ENCODE measurements at regions of chr21 and their contacts with region 1.

Region 1: GRCh38 chr21:45534663-45535331 is 7.4 kb downstream of the SLC19A1 start:
- DNase-seq: peak; percentile 42
- H3K4me3 ChIP-seq: no peak overlapping the region
- H3K27ac ChIP-seq: peak overlapping the region; percentile 15
- H3K4me1 ChIP-seq: peaks cover 24% of the 10 kb centered on the region
- H3K27me3 ChIP-seq: no peaks in the 10 kb centered on the region
- CTCF ChIP-seq: no peak
- POLR2A ChIP-seq: no peak

Region 2: DNA sequence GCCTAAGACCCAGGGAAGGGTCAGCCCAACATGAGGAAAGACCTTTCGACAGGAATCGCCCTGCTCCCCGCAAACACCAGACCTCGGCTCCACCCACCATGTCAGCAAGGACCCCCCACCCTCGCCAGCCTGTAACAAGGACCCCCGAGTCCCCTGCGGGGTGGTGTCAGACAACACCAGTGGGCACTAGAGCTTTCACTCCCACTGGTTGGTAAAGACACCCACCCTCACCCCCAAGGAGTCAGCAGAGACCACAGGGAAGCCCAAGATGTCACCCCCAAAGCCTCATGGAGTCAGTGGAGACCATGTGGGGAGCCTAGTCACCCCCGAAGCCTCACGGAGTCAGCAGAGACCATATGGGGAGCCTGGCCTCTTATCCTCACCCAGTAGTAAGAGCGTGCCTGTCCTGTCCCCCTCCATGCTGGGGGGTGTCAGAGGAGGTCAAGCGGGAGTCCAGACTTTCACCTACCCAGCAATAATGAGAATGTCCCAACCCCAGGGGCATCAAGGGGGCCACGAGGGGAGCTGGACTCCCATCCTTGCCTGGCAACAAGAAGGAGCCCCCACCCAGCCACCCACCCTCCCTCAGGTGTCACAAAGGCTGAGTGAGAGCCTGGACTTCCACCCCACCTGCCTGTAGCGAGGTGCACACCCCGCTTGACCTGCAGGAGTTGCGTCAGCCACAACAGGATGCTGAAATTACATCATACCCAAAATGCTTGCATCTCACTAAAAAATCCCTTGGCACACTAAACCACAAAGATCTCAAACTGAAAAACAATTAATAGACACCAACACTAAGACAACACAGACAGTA is 17.3 kb before region 1 on chr21:
- CTCF ChIA-PET with region 1: no interaction called
- POLR2A ChIA-PET with region 1: no interaction called
- dilution Hi-C with region 1: no loop called
- intact Hi-C with region 1: loop called (anchors 2 kb)
- DNase-seq: peak; percentile 15
- H3K4me3 ChIP-seq: no peak overlapping the region
- H3K27ac ChIP-seq: peak overlapping the region; percentile 84
- H3K4me1 ChIP-seq: peaks cover 21% of the 10 kb centered on the region
- H3K27me3 ChIP-seq: no peaks in the 10 kb centered on the region
- CTCF ChIP-seq: no peak
- POLR2A ChIP-seq: no peak

Measured in endothelial cell of umbilical vein (primary cell).